ENCODE measurements at regions of chr6 and their contacts with region 1.

Region 1: DNA sequence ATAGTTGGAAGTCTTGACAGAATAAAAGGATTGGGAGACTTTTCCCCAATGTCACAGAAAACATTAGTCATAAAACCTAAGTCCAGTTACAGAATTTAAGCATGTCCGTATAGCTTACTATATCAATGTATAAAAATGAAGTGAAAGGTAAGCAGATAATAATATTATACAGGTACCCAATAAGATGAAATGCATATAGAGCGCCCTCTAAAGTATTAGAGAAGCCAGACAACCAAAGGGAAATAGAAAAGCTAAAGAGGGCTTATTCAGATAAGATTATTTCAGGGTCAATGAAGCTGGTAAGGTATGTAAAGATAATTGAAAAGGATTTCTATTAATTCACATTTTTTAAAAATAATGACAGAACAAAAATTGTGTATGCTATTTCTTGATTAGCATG is 947.7 kb upstream of the MAP3K7 start:
- DNase-seq: no peak
- ATAC-seq: no peak; the same call in 1 of the 2 replicates
- H3K4me3 Mint-ChIP-seq: no peak overlapping the region
- H3K27ac Mint-ChIP-seq: no peak overlapping the region
- H3K4me1 Mint-ChIP-seq: no peaks in the 10 kb centered on the region
- H3K27me3 Mint-ChIP-seq: no peaks in the 10 kb centered on the region
- CTCF ChIP-seq: no peak

Region 2: GRCh38 chr6:91487696-91488392 is 46.8 kb before region 1 on chr6:
- CTCF ChIA-PET with region 1: no interaction called
- POLR2A ChIA-PET with region 1: no interaction called
- DNase-seq: no peak
- ATAC-seq: peak; percentile 83
- H3K4me3 Mint-ChIP-seq: no peak overlapping the region
- H3K27ac Mint-ChIP-seq: no peak overlapping the region
- H3K4me1 Mint-ChIP-seq: peaks cover 15% of the 10 kb centered on the region
- H3K27me3 Mint-ChIP-seq: no peaks in the 10 kb centered on the region
- CTCF ChIP-seq: no peak

Region 3: GRCh38 chr6:91523511-91523910 is 11.1 kb before region 1 on chr6:
- CTCF ChIA-PET with region 1: interaction called, 15 read pairs
- POLR2A ChIA-PET with region 1: no interaction called
- DNase-seq: no peak
- ATAC-seq: no peak
- H3K4me3 Mint-ChIP-seq: no peak overlapping the region
- H3K27ac Mint-ChIP-seq: no peak overlapping the region
- H3K4me1 Mint-ChIP-seq: no peaks in the 10 kb centered on the region
- H3K27me3 Mint-ChIP-seq: no peaks in the 10 kb centered on the region
- CTCF ChIP-seq: no peak

Region 4: GRCh38 chr6:91580635-91581034 is 46.0 kb after region 1 on chr6:
- CTCF ChIA-PET with region 1: no interaction called
- POLR2A ChIA-PET with region 1: no interaction called
- DNase-seq: no peak
- ATAC-seq: no peak
- H3K4me3 Mint-ChIP-seq: no peak overlapping the region
- H3K27ac Mint-ChIP-seq: no peak overlapping the region
- H3K4me1 Mint-ChIP-seq: no peaks in the 10 kb centered on the region
- H3K27me3 Mint-ChIP-seq: no peaks in the 10 kb centered on the region
- CTCF ChIP-seq: no peak